ENCODE measurements at regions of chr16 and their contacts with region 1.

Region 1: DNA sequence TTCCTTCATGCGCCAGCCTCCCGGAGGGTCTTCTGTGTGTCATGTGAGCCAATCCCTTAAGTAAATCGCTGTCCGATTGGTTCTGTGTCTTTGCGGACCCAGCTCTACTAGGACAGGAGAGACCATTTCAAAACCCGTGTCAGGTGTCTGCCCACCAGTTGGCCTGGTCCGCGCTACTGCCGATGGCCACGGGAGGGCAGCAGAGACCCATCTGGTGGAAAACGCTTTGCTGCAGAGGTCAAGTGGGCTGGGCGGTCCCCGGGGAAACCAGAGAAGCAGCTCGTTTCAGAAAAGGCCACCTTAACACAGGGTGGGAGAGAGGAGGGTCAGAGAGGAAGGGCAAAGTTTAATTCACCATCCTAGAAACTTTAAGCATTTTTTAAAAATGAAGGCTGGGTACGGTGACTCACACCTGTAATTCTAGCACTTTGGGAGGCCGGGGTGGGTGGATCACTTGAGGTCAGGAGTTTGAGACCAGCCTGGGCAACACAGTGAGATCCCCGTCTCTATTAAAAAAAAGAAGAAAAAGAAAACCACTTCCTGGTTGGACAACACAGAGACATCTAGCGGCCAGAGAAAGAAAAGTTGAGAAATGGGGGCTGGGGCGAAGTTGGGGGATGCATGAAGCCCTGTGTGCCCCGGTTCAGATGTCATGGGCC is 2.8 kb upstream of the CIBAR2 start:
- H3K4me3 ChIP-seq: no peak overlapping the region
- H3K27ac ChIP-seq: no peak overlapping the region
- H3K4me1 ChIP-seq: no peaks in the 10 kb centered on the region
- CTCF ChIP-seq: peak; percentile 89

Region 2: DNA sequence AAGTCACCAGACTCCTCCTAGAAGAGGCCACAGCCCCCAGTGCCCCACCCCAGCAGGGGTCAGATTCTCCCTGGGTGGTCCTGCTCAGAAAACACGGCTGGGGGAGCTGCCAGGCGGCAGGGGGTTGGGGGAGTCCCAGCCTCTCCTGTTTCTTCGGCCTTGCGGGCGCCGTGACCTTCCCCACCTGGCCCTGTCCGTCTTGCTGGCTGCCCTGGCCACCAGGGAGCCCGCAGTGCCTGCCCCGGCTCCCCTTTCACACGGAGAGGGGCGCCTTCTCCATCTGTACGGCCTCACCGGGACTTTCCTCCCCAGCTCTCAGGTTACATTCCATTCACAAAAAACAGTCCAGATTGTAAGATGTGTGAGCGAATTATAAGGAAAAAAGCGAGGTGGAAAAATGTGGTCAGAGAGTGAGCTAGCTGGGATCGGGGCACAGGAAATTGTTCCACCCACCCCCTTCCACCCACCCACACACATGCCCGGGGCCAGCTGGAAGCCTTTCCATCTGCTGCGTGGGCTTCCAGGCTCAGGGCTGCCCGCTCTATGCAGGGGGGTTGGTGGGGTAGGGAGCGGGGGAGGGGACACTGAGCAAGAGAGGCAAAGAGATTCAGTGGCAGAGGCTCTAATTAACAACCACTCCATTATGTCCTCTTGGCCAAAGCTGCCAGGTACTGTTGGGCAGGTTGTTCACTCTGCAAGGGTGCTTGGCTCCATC is 11.8 kb after region 1 on chr16:
- CTCF ChIA-PET with region 1: interaction called, 38 read pairs
- POLR2A ChIA-PET with region 1: no interaction called
- H3K4me3 ChIP-seq: no peak overlapping the region
- H3K27ac ChIP-seq: peak overlapping the region; percentile 31; the same call in 1 of the 2 replicates
- H3K4me1 ChIP-seq: peaks cover 4% of the 10 kb centered on the region
- CTCF ChIP-seq: no peak

Region 3: GRCh38 chr16:85245307-85246172 is 130.5 kb after region 1 on chr16:
- CTCF ChIA-PET with region 1: interaction called, 11 read pairs
- POLR2A ChIA-PET with region 1: interaction called, 4 read pairs
- H3K4me3 ChIP-seq: no peak overlapping the region
- H3K27ac ChIP-seq: no peak overlapping the region
- H3K4me1 ChIP-seq: peaks cover 5% of the 10 kb centered on the region; the same call in 1 of the 2 replicates
- CTCF ChIP-seq: peak; percentile 96

Region 4: DNA sequence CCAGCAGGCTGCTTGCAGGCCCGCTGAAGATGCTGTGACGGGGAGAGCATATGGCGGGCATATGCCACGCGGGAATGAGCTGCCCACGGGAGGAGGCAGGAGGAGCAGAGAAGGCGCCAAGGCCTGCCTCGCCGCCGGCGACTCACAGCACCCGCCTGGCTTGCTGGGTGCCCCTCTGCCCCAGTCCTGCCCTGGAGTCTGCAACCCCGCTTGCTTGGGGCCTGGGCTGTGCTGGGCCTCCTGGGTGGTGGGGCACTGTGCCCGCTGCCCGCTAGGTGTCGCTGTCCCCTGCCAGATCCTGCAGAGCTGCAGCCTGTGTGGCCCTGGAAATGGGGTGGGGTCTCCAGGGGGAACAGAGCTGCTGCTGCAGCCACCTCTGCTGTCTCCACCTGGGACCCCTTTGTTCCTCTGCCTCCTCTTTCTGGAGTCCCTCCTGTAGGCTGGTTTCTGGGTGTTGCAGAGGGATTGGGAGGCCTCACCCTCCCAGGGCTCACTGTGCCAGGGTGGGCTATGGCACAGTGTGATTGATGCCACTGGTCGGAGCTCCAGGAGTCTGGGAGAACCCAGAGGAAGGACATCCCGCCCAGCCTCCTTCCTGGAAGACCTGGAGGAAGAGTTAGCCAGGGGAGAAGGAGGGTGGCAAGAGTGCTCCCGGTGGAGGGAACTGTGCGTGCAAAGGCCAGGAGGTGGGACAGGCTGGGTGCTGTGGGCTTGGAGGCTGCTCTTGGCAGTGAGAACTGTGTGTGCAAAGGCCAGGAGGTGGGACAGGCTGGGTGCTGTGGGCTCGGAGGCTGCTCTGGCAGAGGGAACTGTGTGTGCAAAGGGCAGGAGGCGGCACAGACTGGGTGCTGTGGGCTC is 138.3 kb after region 1 on chr16:
- CTCF ChIA-PET with region 1: interaction called, 11 read pairs
- POLR2A ChIA-PET with region 1: no interaction called
- H3K4me3 ChIP-seq: no peak overlapping the region
- H3K27ac ChIP-seq: no peak overlapping the region
- H3K4me1 ChIP-seq: no peaks in the 10 kb centered on the region
- CTCF ChIP-seq: peak; percentile 86

Region 5: GRCh38 chr16:85626191-85626981 is 511.3 kb after region 1 on chr16:
- CTCF ChIA-PET with region 1: no interaction called
- POLR2A ChIA-PET with region 1: no interaction called
- H3K4me3 ChIP-seq: no peak overlapping the region
- H3K27ac ChIP-seq: peak overlapping the region; percentile 20; the same call in 1 of the 2 replicates
- H3K4me1 ChIP-seq: peaks cover 11% of the 10 kb centered on the region
- CTCF ChIP-seq: no peak